ENCODE measurements at regions of chr11 and their contacts with region 1.

Region 1: DNA sequence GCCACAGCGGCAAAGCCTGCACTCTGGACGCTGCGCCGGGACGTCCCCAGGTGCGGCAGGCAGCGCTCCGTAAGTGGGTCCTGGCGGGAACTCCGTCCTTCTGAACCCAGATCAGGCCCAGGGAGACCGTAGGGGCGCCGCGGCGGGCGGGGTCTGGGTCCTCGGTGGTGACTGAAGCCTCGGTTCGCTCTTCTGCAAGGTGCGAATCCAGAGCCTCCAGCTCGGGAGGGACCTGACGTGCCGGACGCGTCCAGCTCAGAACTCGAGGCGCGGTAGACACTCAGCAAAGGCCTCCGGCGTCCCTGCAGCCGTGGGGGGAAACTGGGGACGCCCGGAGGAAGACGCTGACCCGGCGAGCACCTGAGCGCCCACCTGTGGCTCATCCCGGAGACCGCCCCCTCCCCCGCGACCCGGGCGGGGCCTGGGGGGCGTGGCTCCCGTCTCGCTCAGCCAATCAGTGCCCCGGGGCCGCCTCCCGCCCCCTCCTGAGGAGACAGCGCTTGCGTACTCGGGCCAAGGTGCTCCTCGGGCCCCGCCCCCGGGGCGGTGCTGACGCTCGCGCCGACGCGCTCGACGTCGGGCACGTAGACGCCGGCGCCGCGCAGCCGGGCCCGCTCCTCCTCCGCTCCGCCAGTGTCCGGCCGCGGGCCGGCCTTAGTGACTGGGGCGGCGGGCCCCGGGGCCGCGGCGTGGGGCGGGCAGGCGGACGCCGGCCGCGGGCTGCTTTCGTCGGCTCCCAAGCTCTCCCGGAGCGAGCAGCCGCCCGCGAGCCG is at the start of gene PPFIA1:
- DNase-seq: peak; percentile 89 to 98 (median 96)
- ATAC-seq: peak; percentile 92
- H3K4me3 ChIP-seq: peak within 1 kb of the TSS; percentile 98
- H3K4me3 Mint-ChIP-seq: peak within 1 kb of the TSS; percentile 94
- H3K27ac ChIP-seq: peak within 1 kb of the TSS in 1 of 2 donors; percentile 58
- H3K27ac Mint-ChIP-seq: peak within 1 kb of the TSS; percentile 88
- H3K4me1 ChIP-seq: peaks cover 24% of the 10 kb centered on the region
- H3K4me1 Mint-ChIP-seq: peaks cover 35% of the 10 kb centered on the region
- H3K27me3 ChIP-seq: peaks cover 4 to 7% of the 10 kb centered on the region in 2 experiments
- H3K27me3 Mint-ChIP-seq: peaks cover 12% of the 10 kb centered on the region
- CTCF ChIP-seq: no peak
- total RNA-seq, gene PPFIA1: 34.3 to 42.0 TPM

Region 2: GRCh38 chr11:69817265-69818230 is 452.7 kb before region 1 on chr11:
- CTCF ChIA-PET with region 1: no interaction called
- POLR2A ChIA-PET with region 1: no interaction called
- intact Hi-C with region 1: no loop called
- DNase-seq: no peak
- ATAC-seq: no peak
- H3K4me3 ChIP-seq: no peak overlapping the region
- H3K4me3 Mint-ChIP-seq: no peak overlapping the region
- H3K27ac ChIP-seq: no peak overlapping the region
- H3K27ac Mint-ChIP-seq: no peak overlapping the region
- H3K4me1 ChIP-seq: no peaks in the 10 kb centered on the region
- H3K4me1 Mint-ChIP-seq: no peaks in the 10 kb centered on the region
- H3K27me3 ChIP-seq: peaks cover 19 to 53% of the 10 kb centered on the region in 2 experiments
- H3K27me3 Mint-ChIP-seq: peaks cover 54% of the 10 kb centered on the region
- CTCF ChIP-seq: no peak

Region 3: DNA sequence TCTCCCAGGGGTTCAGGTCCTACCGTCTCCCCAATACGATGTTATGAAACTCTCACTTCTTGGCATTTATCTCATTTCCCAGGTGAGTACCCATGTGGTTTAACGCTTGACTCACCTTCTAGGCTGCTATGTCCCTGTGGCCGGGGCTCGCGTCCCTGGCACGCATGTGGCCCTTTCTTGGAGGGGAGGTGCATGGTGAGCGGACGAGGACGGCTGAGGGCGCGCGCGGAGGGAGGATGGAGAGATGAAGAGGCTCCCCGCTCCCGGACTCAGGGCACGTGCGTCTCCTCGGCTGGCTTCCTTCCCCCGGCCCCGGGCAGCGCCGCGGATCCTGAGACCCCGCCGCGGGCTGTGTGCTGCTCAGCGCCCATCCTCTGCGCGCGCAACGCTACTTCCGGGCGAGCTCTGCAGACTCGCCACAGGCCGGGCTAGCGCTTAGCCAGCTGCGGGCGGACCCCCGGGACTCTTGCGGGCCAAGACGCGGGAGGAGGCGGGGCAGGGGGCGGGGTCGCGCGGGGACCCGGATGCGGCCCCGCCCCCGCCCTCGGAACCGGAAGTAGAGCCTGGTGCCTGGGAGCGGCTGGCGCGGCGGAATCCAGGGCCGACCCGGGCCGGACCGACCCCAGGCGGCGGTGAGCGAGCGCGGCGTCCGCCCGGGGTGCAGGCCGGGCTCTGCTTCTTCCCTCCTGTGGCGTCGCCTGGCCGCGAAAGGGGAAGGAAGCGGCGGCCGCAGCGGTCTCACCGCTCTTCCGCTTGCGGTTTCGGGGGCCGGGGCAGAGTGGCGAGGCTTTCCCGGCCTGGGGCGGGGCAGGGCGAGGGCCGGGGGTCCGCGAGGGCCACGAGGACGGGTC is 127.9 kb after region 1 on chr11 and contains the start of gene CTTN:
- CTCF ChIA-PET with region 1: no interaction called
- POLR2A ChIA-PET with region 1: no interaction called
- intact Hi-C with region 1: loop called in 1 of 2 experiments (anchors 5 kb)
- DNase-seq: peak; percentile 34 to 72 (median 53)
- ATAC-seq: peak; percentile 76
- H3K4me3 ChIP-seq: peak within 1 kb of the TSS; percentile 62
- H3K4me3 Mint-ChIP-seq: peak within 1 kb of the TSS; percentile 88
- H3K27ac ChIP-seq: no peak within 1 kb of the TSS
- H3K27ac Mint-ChIP-seq: no peak within 1 kb of the TSS
- H3K4me1 ChIP-seq: peaks cover 22% of the 10 kb centered on the region
- H3K4me1 Mint-ChIP-seq: peaks cover 12% of the 10 kb centered on the region
- H3K27me3 ChIP-seq: peaks cover 17 to 22% of the 10 kb centered on the region in 2 experiments
- H3K27me3 Mint-ChIP-seq: peaks cover 17% of the 10 kb centered on the region
- CTCF ChIP-seq: no peak
- total RNA-seq, gene CTTN: 0.45 to 0.80 TPM

Region 4: GRCh38 chr11:70410276-70411205 is 140.3 kb after region 1 on chr11:
- CTCF ChIA-PET with region 1: no interaction called
- POLR2A ChIA-PET with region 1: no interaction called
- intact Hi-C with region 1: no loop called
- DNase-seq: no peak
- ATAC-seq: no peak
- H3K4me3 ChIP-seq: no peak overlapping the region
- H3K4me3 Mint-ChIP-seq: no peak overlapping the region
- H3K27ac ChIP-seq: no peak overlapping the region
- H3K27ac Mint-ChIP-seq: no peak overlapping the region
- H3K4me1 ChIP-seq: no peaks in the 10 kb centered on the region
- H3K4me1 Mint-ChIP-seq: no peaks in the 10 kb centered on the region
- H3K27me3 ChIP-seq: no peaks in the 10 kb centered on the region
- H3K27me3 Mint-ChIP-seq: no peaks in the 10 kb centered on the region
- CTCF ChIP-seq: no peak

Measured in CD4-positive, alpha-beta T cell (primary cell).